ENCODE measurements at regions of chr17 and their contacts with region 1.

Region 1: GRCh38 chr17:64216338-64217248 is 46.5 kb downstream of the TEX2 start:
- DNase-seq: peak; percentile 37 to 64 (median 58)
- ATAC-seq: peak; percentile 62 to 78 (median 73)
- H3K4me3 ChIP-seq: no peak overlapping the region
- H3K27ac ChIP-seq: peak overlapping the region; percentile 47 to 85 (median 74)
- H3K4me1 ChIP-seq: peaks cover 10 to 62% (median 41%) of the 10 kb centered on the region in 12 donors
- H3K27me3 ChIP-seq: no peaks in the 10 kb centered on the region
- CTCF ChIP-seq: peak in 4 of 12 donors; percentile 9 to 32 (median 24)
- POLR2A ChIP-seq: no peak

Region 2: DNA sequence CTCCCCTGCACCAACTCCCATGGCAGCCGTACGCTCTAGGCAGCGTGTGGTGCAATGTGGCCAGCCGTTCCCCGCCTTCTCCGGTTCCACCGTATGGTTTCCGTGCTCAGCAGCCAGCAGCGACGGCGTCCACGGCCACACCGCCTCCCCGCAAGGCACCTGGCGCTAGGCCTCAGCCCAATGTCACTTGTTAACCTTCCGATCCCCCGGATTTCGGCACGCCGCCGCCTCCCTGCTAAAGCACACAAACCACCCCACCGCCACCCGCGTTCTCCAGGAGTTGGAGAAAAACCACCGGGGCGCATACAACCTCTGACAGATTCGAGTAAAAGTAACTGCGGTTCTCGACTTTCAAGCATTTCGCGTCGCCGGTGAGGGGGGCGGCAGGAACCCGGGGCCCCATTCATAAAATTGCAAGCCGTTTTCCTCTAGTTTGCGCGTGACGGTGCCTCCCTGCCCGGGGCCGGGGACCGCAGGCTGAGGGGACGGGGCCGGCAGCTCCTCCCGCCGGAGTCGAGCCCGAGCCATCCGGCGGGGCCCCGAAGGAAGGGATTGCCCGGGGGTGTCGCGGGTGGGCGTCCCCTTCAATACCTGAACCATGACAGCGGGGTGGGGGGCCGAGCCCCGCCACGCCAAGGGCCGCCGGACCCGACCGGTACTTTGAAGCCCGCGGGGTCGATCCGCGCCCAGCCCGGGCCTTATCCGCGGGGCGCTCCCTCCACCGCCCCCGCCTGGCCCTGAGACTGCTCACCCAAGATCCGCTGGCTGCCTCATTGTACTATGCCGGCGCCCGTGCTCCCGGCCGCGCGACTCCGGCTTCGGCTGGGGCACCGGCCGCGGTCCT is 46.0 kb after region 1 on chr17 and contains the start of gene TEX2:
- intact Hi-C with region 1: loop called in 1 of 10 experiments (anchors 5 kb)
- DNase-seq: peak; percentile 56 to 81 (median 67)
- ATAC-seq: peak; percentile 30 to 70 (median 64)
- H3K4me3 ChIP-seq: peak within 1 kb of the TSS; percentile 86 to 100 (median 96)
- H3K27ac ChIP-seq: peak within 1 kb of the TSS; percentile 62 to 97 (median 93)
- H3K4me1 ChIP-seq: peaks cover 4 to 50% (median 33%) of the 10 kb centered on the region in 12 donors
- H3K27me3 ChIP-seq: no peaks in the 10 kb centered on the region
- CTCF ChIP-seq: no peak
- POLR2A ChIP-seq: peak; percentile 21 to 65
- total RNA-seq, gene TEX2: 42.2 to 55.8 (median 51.1) TPM

Region 3: GRCh38 chr17:64441772-64442540 is 225.4 kb after region 1 on chr17:
- intact Hi-C with region 1: no loop called
- DNase-seq: peak in 4 of 5 donors; percentile 36 to 48 (median 41)
- ATAC-seq: peak; percentile 71 to 90 (median 84)
- H3K4me3 ChIP-seq: peak overlapping the region in 2 of 12 donors; percentile 9 to 11
- H3K27ac ChIP-seq: peak overlapping the region in 7 of 12 donors; percentile 17 to 93 (median 68)
- H3K4me1 ChIP-seq: peaks cover 0 to 39% (median 2%) of the 10 kb centered on the region in 12 donors
- H3K27me3 ChIP-seq: no peaks in the 10 kb centered on the region
- CTCF ChIP-seq: no peak
- POLR2A ChIP-seq: no peak

Measured in heart left ventricle (tissue), 16 donors.